Activated CD4-positive, alpha-beta memory T cell treated with anti-CD3 and anti-CD28 coated beads for 36 hours (primary cell): ENCODE measurements at regions of chr11 and their contacts with region 1.

Region 1: GRCh38 chr11:59550368-59550841 is 39.1 kb downstream of the OR4D9 start:
- DNase-seq: peak; percentile 91
- H3K4me3 Mint-ChIP-seq: peak overlapping the region; percentile 85
- H3K27ac Mint-ChIP-seq: peak overlapping the region; percentile 97
- H3K4me1 Mint-ChIP-seq: peaks cover 30% of the 10 kb centered on the region
- H3K27me3 Mint-ChIP-seq: peaks cover 7% of the 10 kb centered on the region

Region 2: GRCh38 chr11:59142530-59143507 is 407.6 kb before region 1 on chr11 and contains the start of gene FAM111A:
- CTCF ChIA-PET with region 1: no interaction called
- POLR2A ChIA-PET with region 1: no interaction called
- intact Hi-C with region 1: loop called (anchors 5 kb)
- DNase-seq: peak; percentile 90
- H3K4me3 Mint-ChIP-seq: peak within 1 kb of the TSS; percentile 94
- H3K27ac Mint-ChIP-seq: peak within 1 kb of the TSS; percentile 93
- H3K4me1 Mint-ChIP-seq: peaks cover 50% of the 10 kb centered on the region
- H3K27me3 Mint-ChIP-seq: no peaks in the 10 kb centered on the region
- total RNA-seq, gene FAM111A: 87.6 to 87.8 TPM

Region 3: GRCh38 chr11:59560702-59561469 is 10.5 kb after region 1 on chr11:
- CTCF ChIA-PET with region 1: interaction called, 12 read pairs
- POLR2A ChIA-PET with region 1: interaction called, 6 read pairs
- intact Hi-C with region 1: loop called (anchors 1 kb)
- DNase-seq: peak; percentile 90
- H3K4me3 Mint-ChIP-seq: peak overlapping the region; percentile 93
- H3K27ac Mint-ChIP-seq: peak overlapping the region; percentile 96
- H3K4me1 Mint-ChIP-seq: peaks cover 42% of the 10 kb centered on the region
- H3K27me3 Mint-ChIP-seq: peaks cover 4% of the 10 kb centered on the region

Region 4: GRCh38 chr11:59582006-59582405 is 31.6 kb after region 1 on chr11:
- CTCF ChIA-PET with region 1: no interaction called
- POLR2A ChIA-PET with region 1: no interaction called
- intact Hi-C with region 1: no loop called
- DNase-seq: no peak
- H3K4me3 Mint-ChIP-seq: no peak overlapping the region
- H3K27ac Mint-ChIP-seq: no peak overlapping the region
- H3K4me1 Mint-ChIP-seq: no peaks in the 10 kb centered on the region
- H3K27me3 Mint-ChIP-seq: no peaks in the 10 kb centered on the region

Region 5: DNA sequence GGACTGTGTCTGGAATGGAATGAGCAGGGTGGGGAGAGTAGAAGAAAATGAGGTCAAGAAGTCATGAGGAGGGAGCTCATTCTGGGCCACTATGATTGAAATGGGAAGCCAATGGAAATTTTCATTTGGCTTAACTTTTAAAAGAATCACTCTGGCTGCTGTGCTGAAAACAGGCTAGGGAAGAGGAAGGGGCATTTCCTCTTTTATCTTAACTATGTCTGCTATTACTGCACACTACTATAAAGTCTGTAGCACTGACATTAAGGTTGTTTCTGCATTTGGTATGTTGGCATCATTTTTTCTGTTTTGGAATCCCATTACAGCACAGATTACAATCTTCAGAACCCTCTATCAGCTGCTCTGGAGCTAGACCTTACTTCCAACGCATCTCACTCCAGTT is 110.2 kb after region 1 on chr11:
- CTCF ChIA-PET with region 1: no interaction called
- POLR2A ChIA-PET with region 1: no interaction called
- intact Hi-C with region 1: no loop called
- DNase-seq: no peak
- H3K4me3 Mint-ChIP-seq: no peak overlapping the region
- H3K27ac Mint-ChIP-seq: peak overlapping the region; percentile 46
- H3K4me1 Mint-ChIP-seq: peaks cover 32% of the 10 kb centered on the region
- H3K27me3 Mint-ChIP-seq: no peaks in the 10 kb centered on the region

Region 6: DNA sequence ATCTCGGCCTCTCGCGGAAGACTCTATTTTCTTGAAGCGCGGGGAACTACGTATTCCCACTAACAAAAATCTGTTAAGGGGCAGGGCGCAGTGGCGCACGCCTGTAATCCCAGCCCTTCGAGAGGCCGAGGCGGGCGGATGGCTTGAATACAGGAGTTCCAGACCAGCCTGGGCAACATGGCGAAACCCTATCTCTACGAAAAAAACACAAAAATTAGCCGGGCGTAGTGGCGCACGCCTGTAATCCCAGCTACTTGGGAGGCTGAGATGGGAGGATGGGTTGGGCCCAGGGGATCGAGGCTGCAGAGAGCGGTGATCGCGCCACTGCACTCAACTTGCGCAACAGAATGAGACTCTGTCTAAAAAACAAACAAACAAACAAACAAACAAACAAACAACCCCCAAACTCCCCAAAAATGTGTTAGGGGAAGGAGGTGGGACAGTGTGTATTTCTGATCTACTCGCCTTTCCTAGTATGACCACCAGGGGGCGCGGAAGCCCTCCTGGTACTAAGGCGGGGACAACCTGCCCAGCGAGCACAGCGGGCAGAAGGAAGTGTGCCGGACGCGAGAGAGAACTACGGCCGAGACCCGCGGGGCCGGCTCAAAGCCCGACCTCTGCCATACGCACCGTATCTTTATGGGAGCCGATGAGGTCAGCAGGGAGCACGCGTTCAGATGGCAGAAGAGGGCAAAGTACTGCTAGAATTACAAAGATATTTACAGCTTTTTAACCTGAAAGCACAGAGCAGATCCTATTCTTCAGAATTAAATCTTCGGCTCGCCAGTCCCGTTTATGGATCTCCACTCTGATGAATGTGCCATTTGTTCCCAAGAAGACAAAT is 203.5 kb after region 1 on chr11:
- CTCF ChIA-PET with region 1: no interaction called
- POLR2A ChIA-PET with region 1: no interaction called
- intact Hi-C with region 1: no loop called
- DNase-seq: peak; percentile 88
- H3K4me3 Mint-ChIP-seq: peak overlapping the region; percentile 84
- H3K27ac Mint-ChIP-seq: no peak overlapping the region
- H3K4me1 Mint-ChIP-seq: peaks cover 17% of the 10 kb centered on the region
- H3K27me3 Mint-ChIP-seq: peaks cover 3% of the 10 kb centered on the region

Region 7: GRCh38 chr11:59810189-59810910 is 259.9 kb after region 1 on chr11 and contains the start of gene MRPL16:
- CTCF ChIA-PET with region 1: interaction called, 3 read pairs
- POLR2A ChIA-PET with region 1: no interaction called
- intact Hi-C with region 1: loop called (anchors 5 kb)
- DNase-seq: peak; percentile 95
- H3K4me3 Mint-ChIP-seq: peak within 1 kb of the TSS; percentile 90
- H3K27ac Mint-ChIP-seq: peak within 1 kb of the TSS; percentile 86
- H3K4me1 Mint-ChIP-seq: peaks cover 20% of the 10 kb centered on the region
- H3K27me3 Mint-ChIP-seq: no peaks in the 10 kb centered on the region
- total RNA-seq, gene MRPL16: 80.2 to 80.5 TPM

Region 8: DNA sequence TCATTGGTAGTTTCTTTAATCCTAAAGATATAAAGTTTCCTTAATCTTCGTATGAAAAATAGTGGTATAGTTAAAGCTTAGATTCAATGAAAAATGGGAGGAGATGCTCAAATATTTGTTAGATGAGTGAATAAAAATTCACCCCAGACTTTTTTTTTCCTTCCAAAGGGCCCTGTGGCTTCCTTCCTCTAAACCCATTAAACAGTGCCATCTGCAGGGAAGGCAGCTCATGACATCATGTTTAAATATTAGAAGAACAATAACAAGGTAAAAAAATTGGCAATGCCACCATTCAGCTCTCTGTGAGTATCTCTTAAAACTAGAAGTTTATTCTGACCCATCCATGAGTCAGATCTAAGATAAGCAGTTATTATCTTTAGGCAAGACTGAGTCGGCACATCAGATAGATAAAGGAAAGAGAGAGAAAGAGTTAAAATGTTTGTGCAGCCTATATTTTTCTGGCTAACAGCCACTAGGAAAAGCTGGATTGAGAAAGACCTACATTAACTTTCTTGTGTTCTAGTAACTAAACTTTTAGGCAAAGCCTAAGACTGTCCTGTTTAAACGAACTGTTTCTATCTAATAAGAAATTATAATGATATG is 368.7 kb after region 1 on chr11:
- CTCF ChIA-PET with region 1: no interaction called
- POLR2A ChIA-PET with region 1: no interaction called
- intact Hi-C with region 1: no loop called
- DNase-seq: peak; percentile 33
- H3K4me3 Mint-ChIP-seq: no peak overlapping the region
- H3K27ac Mint-ChIP-seq: no peak overlapping the region
- H3K4me1 Mint-ChIP-seq: no peaks in the 10 kb centered on the region
- H3K27me3 Mint-ChIP-seq: peaks cover 2% of the 10 kb centered on the region